Mammary epithelial cell (primary cell): ENCODE measurements at regions of chr3 and their contacts with region 1.

Region 1: DNA sequence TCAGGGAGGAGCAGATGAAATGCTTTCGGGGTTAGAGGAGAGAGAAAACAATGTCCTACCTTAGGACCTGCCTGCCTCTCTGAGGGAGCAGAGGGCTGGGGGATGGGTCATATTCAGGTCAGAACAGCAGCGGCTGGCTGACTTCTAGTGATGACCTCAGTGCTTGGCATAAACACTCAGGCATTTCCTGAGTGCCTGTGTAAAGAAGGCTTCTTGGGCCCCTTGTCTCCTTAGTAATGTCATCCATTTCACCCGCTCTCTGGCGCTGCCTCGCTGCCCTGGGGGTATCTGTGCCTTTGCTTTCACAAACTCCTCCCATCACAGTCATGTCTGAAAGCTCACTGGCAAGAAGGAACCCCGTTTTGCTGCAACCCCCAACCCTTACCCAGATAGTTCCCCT is 82.9 kb upstream of the GSK3B start:
- DNase-seq: peak; percentile 91
- H3K4me3 ChIP-seq: peak overlapping the region in 1 of 3 experiments; percentile 19
- H3K27ac ChIP-seq: peak overlapping the region; percentile 82
- H3K4me1 ChIP-seq: peaks cover 45% of the 10 kb centered on the region
- H3K27me3 ChIP-seq: no peaks in the 10 kb centered on the region
- CTCF ChIP-seq: peak in 1 of 2 donors; percentile 20

Region 2: GRCh38 chr3:120160050-120160449 is 17.1 kb before region 1 on chr3:
- CTCF ChIA-PET with region 1: no interaction called
- dilution Hi-C with region 1: no loop called
- in situ Hi-C with region 1: no loop called
- intact Hi-C with region 1: loop called (anchors 1 kb)
- DNase-seq: peak; percentile 99
- H3K4me3 ChIP-seq: no peak overlapping the region
- H3K27ac ChIP-seq: peak overlapping the region; percentile 92
- H3K4me1 ChIP-seq: peaks cover 36% of the 10 kb centered on the region
- H3K27me3 ChIP-seq: no peaks in the 10 kb centered on the region
- CTCF ChIP-seq: no peak